PC-9 (cell line): ENCODE measurements at regions of chr10 and their contacts with region 1.

Region 1: GRCh38 chr10:72692057-72692910 is at the start of gene MCU:
- DNase-seq: peak in 1 of 2 experiments; percentile 95
- H3K4me3 ChIP-seq: peak within 1 kb of the TSS; percentile 94
- H3K27ac ChIP-seq: peak within 1 kb of the TSS; percentile 32; the same call in 1 of the 2 replicates
- H3K4me1 ChIP-seq: peaks cover 63% of the 10 kb centered on the region
- H3K27me3 ChIP-seq: no peaks in the 10 kb centered on the region
- CTCF ChIP-seq: no peak
- total RNA-seq, gene MCU: 59.5 and 61.9 TPM in 2 replicates

Region 2: GRCh38 chr10:72567884-72568640 is 124.2 kb before region 1 on chr10:
- CTCF ChIA-PET with region 1: no interaction called
- POLR2A ChIA-PET with region 1: interaction called, 11 read pairs
- intact Hi-C with region 1: no loop called
- DNase-seq: no peak
- H3K4me3 ChIP-seq: no peak overlapping the region
- H3K27ac ChIP-seq: no peak overlapping the region
- H3K4me1 ChIP-seq: no peaks in the 10 kb centered on the region
- H3K27me3 ChIP-seq: no peaks in the 10 kb centered on the region
- CTCF ChIP-seq: peak; percentile 57

Region 3: DNA sequence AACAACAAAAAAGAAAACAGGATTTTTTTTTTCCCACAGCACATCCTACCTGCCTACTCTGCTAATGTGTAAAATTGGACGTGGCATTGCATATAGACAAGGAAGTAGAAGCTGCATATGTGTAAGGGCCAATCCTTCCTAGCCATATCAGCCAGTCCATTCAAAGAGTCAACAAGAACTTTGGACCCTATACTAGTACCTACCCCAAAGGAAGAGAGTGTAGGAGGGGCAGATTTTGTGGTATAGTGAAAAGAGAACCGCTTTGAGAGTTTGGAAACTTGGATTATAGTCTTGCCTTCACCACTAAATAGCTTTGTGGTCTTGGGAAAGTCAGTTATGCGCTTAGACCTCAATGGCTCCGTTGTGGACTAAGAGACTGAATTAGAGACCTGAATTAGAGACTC is 12.4 kb before region 1 on chr10:
- CTCF ChIA-PET with region 1: interaction called, 12 read pairs
- POLR2A ChIA-PET with region 1: interaction called, 35 read pairs
- intact Hi-C with region 1: no loop called
- DNase-seq: no peak
- H3K4me3 ChIP-seq: no peak overlapping the region
- H3K27ac ChIP-seq: no peak overlapping the region
- H3K4me1 ChIP-seq: peaks cover 29% of the 10 kb centered on the region
- H3K27me3 ChIP-seq: no peaks in the 10 kb centered on the region
- CTCF ChIP-seq: no peak

Region 4: GRCh38 chr10:72784551-72785351 is 92.5 kb after region 1 on chr10:
- CTCF ChIA-PET with region 1: interaction called, 5 read pairs
- POLR2A ChIA-PET with region 1: interaction called, 5 read pairs
- intact Hi-C with region 1: loop called (anchors 10 kb)
- DNase-seq: peak; percentile 77 to 88
- H3K4me3 ChIP-seq: no peak overlapping the region
- H3K27ac ChIP-seq: peak overlapping the region; percentile 11; the same call in 1 of the 2 replicates
- H3K4me1 ChIP-seq: peaks cover 28% of the 10 kb centered on the region
- H3K27me3 ChIP-seq: no peaks in the 10 kb centered on the region
- CTCF ChIP-seq: no peak

Region 5: DNA sequence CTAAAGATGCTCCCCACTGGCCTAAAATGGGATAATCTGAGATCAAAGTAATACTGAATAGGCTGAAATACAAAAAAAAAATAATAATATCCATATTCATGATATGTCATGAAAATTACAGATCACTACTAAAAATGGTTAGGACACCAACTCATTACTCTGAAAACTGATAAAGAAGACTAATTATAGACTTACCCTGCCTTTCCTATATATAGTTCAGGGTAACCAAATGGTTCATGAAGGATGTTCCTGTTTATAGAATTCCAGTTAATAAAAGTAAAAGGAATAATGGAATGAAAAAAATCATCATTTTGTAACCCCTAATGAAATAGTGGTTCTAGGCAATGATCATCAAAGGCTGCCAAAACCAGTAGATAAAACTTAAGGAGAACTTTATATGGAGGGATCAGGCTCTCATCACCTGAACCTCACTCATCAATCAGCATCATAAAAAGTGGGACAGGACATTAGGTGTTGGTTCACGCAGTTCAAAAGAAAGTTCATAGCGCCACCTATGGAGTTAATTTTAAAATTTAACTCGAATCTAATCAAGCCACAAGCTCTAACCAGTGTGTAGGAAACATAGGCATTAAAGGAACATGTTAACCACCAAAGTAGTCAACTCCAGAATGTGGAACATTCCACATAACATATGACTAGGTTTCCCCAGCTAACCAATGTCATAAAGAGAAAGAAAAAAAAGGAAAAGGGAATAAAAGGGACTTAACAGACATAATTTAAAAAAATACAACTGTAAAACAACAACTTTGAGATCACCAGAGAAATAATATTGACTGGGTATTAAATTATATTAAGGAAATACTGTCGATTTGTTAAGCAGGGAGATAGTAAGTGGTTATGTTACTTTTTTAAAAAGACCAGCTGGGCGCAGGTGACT is 368.7 kb after region 1 on chr10:
- CTCF ChIA-PET with region 1: no interaction called
- POLR2A ChIA-PET with region 1: no interaction called
- intact Hi-C with region 1: loop called (anchors 10 kb)
- DNase-seq: no peak
- H3K4me3 ChIP-seq: no peak overlapping the region
- H3K27ac ChIP-seq: no peak overlapping the region
- H3K4me1 ChIP-seq: no peaks in the 10 kb centered on the region
- H3K27me3 ChIP-seq: no peaks in the 10 kb centered on the region
- CTCF ChIP-seq: peak; percentile 80